Activated CD4-positive, alpha-beta T cell treated with anti-CD3 and anti-CD28 coated beads, Interleukin-2, amount 10 ng/mL, durations not matched to agents 24 days and 14 days (primary cell): ENCODE measurements at regions of chr6 and their contacts with region 1.

Region 1: GRCh38 chr6:170306324-170307079 is at the start of gene FAM120B:
- DNase-seq: peak; percentile 99
- H3K4me3 Mint-ChIP-seq: peak within 1 kb of the TSS; percentile 94
- H3K27ac Mint-ChIP-seq: peak within 1 kb of the TSS; percentile 94
- H3K4me1 Mint-ChIP-seq: peaks cover 31% of the 10 kb centered on the region
- H3K27me3 Mint-ChIP-seq: peaks cover 36% of the 10 kb centered on the region
- total RNA-seq, gene FAM120B: 18.7 and 19.3 TPM in 2 replicates

Region 2: GRCh38 chr6:169751242-169752073 is 555.0 kb before region 1 on chr6 and contains the starts of genes DYNLT2 and ERMARD:
- intact Hi-C with region 1: loop called (anchors 5 kb)
- DNase-seq: peak; percentile 99
- H3K4me3 Mint-ChIP-seq: peak within 1 kb of the TSS; percentile 100
- H3K27ac Mint-ChIP-seq: peak within 1 kb of the TSS; percentile 100
- H3K4me1 Mint-ChIP-seq: peaks cover 28% of the 10 kb centered on the region
- H3K27me3 Mint-ChIP-seq: peaks cover 2% of the 10 kb centered on the region
- total RNA-seq, gene DYNLT2: 2.1 TPM in 2 replicates
- total RNA-seq, gene ERMARD: 26.2 and 27.9 TPM in 2 replicates

Region 3: GRCh38 chr6:170295510-170296422 is 10.7 kb before region 1 on chr6:
- intact Hi-C with region 1: loop called (anchors 2 kb)
- DNase-seq: peak; percentile 77
- H3K4me3 Mint-ChIP-seq: peak overlapping the region; percentile 81
- H3K27ac Mint-ChIP-seq: peak overlapping the region; percentile 41
- H3K4me1 Mint-ChIP-seq: peaks cover 21% of the 10 kb centered on the region
- H3K27me3 Mint-ChIP-seq: peaks cover 73% of the 10 kb centered on the region

Region 4: GRCh38 chr6:170371588-170371987 is 65.1 kb after region 1 on chr6:
- intact Hi-C with region 1: loop called (anchors 2 kb)
- DNase-seq: no peak
- H3K4me3 Mint-ChIP-seq: no peak overlapping the region
- H3K27ac Mint-ChIP-seq: no peak overlapping the region
- H3K4me1 Mint-ChIP-seq: peaks cover 5% of the 10 kb centered on the region
- H3K27me3 Mint-ChIP-seq: no peaks in the 10 kb centered on the region

Region 5: DNA sequence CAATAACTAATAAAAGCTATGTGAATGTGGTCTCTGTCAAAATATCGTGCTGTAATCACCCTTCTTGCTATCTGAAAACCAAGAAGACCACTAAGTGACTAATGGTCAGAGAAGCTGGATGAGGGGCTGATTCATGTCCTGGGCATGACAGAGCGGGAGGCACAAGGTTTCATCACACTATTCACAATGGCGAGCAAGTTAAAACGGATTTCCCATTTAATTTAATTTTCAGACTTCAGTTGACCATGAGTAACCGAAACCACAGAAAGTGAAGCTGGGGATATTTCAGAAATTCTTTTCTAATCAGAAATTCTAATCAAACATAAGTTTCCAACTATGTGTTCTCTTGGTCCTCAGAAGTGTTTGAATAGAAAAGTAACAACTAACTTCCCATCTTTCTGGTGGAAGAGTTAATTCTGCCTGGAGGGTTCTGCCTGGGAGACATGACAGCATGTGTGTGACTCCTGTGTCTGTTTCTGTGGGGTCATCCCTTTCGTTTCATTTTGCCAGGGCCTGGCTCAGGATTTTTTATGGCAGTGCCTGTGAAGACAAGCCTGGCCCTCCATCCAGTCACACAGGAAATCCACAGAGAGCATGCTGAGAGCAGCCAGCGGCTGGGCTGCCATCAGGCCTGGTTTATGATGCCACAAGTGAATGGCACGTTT is 98.9 kb after region 1 on chr6:
- intact Hi-C with region 1: no loop called
- DNase-seq: no peak
- H3K4me3 Mint-ChIP-seq: no peak overlapping the region
- H3K27ac Mint-ChIP-seq: no peak overlapping the region
- H3K4me1 Mint-ChIP-seq: no peaks in the 10 kb centered on the region
- H3K27me3 Mint-ChIP-seq: peaks cover 2% of the 10 kb centered on the region

Region 6: DNA sequence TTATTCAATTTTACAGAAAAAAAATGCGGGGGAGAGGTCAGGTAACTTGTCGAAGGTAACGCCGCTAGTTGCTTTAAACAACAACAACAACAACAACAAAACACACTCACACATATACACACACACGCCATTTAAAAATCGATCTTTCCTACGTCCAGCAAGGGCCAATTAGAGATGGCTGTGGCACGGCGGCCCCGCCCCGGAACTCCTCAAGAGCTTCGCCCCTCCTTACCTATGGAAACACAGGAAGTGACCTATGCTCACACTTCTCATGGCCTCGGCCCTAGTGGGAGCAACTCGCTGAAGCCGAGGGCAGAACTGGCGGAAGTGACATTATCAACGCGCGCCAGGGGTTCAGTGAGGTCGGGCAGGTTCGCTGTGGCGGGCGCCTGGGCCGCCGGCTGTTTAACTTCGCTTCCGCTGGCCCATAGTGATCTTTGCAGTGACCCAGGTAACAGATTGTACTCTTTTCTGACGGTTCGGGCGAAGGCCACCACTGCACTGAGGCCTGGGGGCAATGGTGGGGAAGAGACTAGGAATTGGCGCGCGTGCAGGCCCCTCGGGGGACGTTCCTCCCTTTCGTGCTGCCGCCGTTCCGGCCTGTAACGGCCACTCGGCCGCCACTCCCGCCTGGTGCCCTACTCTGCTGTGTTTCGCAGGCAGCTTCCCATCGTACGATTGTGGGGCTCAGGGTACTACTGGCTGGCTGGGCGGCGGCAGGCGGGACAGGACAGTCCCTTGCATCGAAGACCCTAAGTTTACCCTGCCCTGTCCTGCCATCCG is 247.7 kb after region 1 on chr6 and contains the start of gene TBP:
- intact Hi-C with region 1: loop called (anchors 1 kb)
- DNase-seq: peak; percentile 99
- H3K4me3 Mint-ChIP-seq: no peak within 1 kb of the TSS
- H3K27ac Mint-ChIP-seq: no peak within 1 kb of the TSS
- H3K4me1 Mint-ChIP-seq: peaks cover 31% of the 10 kb centered on the region
- H3K27me3 Mint-ChIP-seq: no peaks in the 10 kb centered on the region
- total RNA-seq, gene TBP: 28.4 and 29.2 TPM in 2 replicates